ENCODE measurements at regions of chr7 and their contacts with region 1.

Region 1: GRCh38 chr7:32942786-32943653 is 14.2 kb upstream of the FKBP9 start:
- H3K4me3 ChIP-seq: peak overlapping the region; percentile 71
- H3K27ac ChIP-seq: peak overlapping the region; percentile 85
- H3K4me1 ChIP-seq: no peaks in the 10 kb centered on the region
- CTCF ChIP-seq: no peak

Region 2: DNA sequence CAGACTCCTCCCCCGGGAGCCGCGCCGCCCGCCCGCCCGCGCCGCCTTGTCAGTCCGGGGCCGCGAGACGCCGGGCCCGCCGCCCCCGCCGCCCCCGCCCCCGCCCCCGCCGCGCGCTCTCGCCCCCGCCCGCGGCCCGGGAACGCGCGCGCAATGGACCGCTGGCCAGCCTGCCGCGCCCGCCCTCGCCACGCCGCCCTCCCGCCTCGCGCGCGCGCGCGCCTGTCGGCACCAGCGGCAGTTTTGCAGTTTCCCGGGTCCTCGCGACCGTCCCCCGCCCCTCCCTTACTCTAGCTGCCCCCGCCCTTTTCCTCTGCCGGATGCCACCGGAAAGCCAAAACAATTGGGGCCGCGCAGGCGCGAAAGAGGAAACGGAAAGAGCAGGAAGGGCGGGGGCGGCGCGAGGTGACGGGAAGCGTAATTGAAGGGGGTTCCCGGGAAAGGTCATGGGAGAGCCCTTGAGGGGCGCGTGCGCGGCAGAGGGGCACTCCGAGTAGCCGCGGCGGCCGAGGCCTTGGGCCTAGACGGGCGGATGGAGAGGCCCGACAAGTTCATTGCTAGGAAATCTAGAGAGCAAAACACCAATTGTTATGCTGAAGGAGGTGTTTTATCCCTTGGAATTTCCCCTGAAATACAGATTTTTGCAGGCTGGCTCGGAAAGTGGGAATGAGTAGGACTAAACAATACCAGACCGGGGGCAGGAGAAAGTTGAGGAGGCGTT is 51.1 kb before region 1 on chr7:
- CTCF ChIA-PET with region 1: interaction called, 4 read pairs
- POLR2A ChIA-PET with region 1: interaction called, 16 read pairs
- H3K4me3 ChIP-seq: peak overlapping the region; percentile 87
- H3K27ac ChIP-seq: peak overlapping the region; percentile 99
- H3K4me1 ChIP-seq: peaks cover 16% of the 10 kb centered on the region
- CTCF ChIP-seq: no peak

Region 3: DNA sequence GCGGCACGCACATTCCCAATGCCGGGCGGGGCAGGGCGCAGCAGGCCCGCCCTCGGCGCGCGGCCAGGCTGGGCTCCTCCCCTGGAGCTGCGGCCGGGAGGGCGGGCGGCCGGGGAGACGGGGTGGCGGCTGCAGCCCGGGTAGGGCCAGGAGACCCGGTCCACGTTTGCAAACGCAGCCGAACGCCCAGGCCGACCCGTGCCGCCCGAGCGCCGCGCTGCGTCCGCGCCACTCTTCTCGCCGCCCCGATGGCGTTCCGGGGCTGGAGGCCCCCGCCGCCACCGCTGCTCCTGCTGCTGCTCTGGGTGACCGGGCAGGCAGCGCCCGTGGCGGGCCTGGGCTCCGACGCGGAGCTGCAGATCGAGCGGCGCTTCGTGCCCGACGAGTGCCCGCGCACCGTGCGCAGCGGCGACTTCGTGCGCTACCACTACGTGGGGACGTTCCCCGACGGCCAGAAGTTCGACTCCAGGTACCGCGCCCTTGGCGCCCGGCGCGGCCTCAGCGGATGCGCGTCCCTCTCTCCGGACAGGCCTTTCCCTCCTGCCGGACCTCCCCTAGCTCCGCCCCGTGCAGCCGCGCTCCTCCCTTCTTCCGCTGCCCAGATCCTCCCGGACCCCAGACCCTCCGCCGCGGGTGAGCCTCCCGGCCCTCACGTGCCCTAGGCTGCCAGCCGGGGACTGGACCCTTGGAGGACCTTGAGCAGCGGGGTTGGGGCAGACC is 14.5 kb after region 1 on chr7 and contains the start of gene FKBP9:
- CTCF ChIA-PET with region 1: interaction called, 4 read pairs
- POLR2A ChIA-PET with region 1: interaction called, 15 read pairs
- H3K4me3 ChIP-seq: peak within 1 kb of the TSS; percentile 68
- H3K27ac ChIP-seq: peak within 1 kb of the TSS; percentile 69; the same call in 1 of the 2 replicates
- H3K4me1 ChIP-seq: no peaks in the 10 kb centered on the region
- CTCF ChIP-seq: 0 out of 2 replicates have a peak, but pooled peaks have one; percentile 7

Region 4: DNA sequence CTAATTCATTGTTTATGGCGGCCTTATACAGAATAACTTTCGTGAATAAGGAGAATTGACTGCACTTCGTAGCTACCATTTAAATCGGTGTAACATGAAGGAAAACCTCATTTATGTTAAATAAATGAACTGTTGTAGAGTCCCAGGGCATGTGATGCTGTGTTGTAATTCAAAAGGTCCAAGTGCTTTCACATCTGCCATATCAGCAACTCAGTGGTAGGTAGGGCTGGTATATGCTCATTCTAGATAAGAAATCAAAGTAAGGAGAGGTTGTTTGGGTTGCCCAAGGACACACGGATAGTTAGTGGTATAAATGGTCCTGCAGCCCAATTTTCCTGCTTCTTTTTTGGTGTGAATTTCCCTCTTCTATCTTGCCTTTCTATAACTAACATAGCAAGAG is 202.1 kb after region 1 on chr7:
- CTCF ChIA-PET with region 1: no interaction called
- POLR2A ChIA-PET with region 1: no interaction called
- H3K4me3 ChIP-seq: no peak overlapping the region
- H3K27ac ChIP-seq: no peak overlapping the region
- H3K4me1 ChIP-seq: no peaks in the 10 kb centered on the region
- CTCF ChIP-seq: no peak

Measured in HEK293 (cell line).